ENCODE measurements at regions of chr15 and their contacts with region 1.

Region 1: DNA sequence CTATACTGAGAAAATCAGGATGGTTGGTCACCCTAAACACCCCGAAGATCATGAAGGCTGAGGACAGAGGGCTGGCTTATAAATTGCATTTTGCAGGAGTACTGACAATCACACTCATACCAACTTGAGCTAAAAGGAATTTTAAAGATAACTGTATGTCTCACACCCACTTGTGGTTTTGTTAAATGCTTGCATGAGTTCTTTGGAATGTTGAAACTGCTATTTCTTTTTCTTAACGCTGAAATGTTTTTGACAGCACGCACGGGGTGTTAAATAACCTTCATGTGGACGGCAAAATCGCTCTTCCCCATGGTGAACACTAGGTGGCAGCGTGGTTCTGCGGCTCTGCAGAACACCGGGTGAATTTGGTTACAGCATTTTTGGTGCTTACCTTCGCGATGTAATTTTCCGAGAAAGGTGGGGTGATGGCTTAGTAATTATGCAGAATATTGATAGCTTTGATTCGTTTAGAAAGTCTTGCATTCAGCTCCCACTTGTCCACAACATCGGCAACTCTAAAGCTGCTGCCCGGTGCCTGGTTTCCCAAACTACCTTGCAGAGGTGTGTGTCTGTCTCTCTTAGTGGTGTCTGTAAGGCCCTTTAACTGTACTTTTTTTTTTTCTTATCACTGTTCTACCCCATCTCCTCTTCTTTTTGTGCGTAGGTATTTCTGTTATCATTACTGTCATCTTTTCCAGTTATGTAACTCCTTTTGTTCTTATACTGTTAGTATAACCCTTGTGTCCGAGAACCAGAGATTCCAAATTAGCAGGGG is 51.7 kb downstream of the ARNT2 start:
- DNase-seq: peak; percentile 88
- H3K4me3 ChIP-seq: no peak overlapping the region
- H3K27me3 ChIP-seq: no peaks in the 10 kb centered on the region
- CTCF ChIP-seq: peak; percentile 87

Region 2: DNA sequence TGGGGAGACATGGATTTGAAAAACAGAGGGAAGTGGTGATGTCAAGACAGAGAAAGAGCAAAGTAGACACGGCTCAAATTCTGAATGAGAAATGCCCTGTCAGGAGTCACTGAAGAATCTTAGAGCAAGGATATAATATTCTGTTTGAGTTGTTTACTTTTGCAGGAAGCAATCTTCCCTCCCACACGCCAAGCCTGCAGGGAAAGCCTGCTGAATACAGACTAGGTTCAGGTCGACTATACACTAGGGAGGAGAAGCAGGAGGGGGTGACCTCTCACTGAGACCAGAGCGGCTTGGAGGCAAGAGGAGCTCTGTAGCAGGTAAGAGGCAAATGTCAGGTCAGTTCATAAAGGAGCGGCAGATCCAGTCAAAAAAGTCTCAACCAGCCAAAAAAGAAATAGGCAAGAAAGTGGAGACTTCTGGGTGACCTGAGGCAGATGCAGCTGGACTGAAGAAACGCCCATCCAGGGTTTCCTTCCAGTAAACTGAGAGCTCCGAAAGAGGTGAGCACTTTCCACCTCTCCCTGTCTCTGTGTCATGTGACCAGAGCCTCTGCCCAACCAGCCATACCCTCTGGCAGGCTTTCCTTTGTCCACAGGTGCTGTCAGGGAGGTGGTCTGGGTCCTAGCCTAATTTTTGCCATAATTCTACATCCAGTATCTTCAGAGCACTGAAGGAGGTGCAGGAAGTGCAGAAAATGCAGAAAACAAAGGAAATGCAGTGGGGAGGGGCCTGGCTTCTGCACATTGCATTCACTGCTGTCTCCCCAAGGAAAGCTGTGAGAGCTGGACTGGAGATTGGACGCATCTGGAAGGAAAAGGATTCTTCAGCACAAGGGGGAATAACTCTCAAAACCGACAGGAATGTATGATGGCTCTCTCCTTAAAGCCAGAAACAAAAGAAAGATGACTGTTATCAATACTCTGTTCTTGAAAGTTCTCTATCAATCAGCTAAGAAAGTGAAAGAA is 166.0 kb before region 1 on chr15:
- CTCF ChIA-PET with region 1: no interaction called
- POLR2A ChIA-PET with region 1: no interaction called
- DNase-seq: no peak
- H3K4me3 ChIP-seq: no peak overlapping the region
- H3K27me3 ChIP-seq: peaks cover 3% of the 10 kb centered on the region
- CTCF ChIP-seq: no peak

Region 3: GRCh38 chr15:80474224-80475215 is 18.7 kb after region 1 on chr15:
- CTCF ChIA-PET with region 1: interaction called, 23 read pairs
- POLR2A ChIA-PET with region 1: no interaction called
- DNase-seq: no peak
- H3K4me3 ChIP-seq: no peak overlapping the region
- H3K27me3 ChIP-seq: no peaks in the 10 kb centered on the region
- CTCF ChIP-seq: no peak

Region 4: DNA sequence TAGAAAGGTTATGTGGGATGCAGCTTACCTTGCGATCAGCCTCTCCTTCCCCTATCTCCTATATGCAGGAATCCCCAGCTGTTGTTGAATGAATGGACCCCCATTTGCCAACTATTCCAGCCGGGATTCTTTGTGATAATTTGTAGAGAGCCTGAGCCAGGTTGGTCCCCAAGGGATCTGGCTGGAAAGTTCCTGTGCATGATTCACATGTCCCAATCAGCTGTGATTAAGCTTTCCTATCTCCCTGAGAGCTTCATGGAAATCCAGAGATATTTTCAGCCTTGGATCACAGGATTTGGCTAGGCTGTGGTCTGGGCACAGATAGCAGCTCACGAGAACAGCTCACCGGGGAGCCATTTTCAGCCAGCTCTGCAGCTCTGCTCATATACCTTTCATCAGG is 25.1 kb after region 1 on chr15:
- CTCF ChIA-PET with region 1: interaction called, 23 read pairs
- POLR2A ChIA-PET with region 1: interaction called, 5 read pairs
- DNase-seq: peak; percentile 85
- H3K4me3 ChIP-seq: peak overlapping the region; percentile 10; the same call in 1 of the 2 replicates
- H3K27me3 ChIP-seq: no peaks in the 10 kb centered on the region
- CTCF ChIP-seq: no peak

Region 5: GRCh38 chr15:80489030-80489594 is 33.3 kb after region 1 on chr15:
- CTCF ChIA-PET with region 1: interaction called, 21 read pairs
- POLR2A ChIA-PET with region 1: no interaction called
- DNase-seq: peak; percentile 97
- H3K4me3 ChIP-seq: no peak overlapping the region
- H3K27me3 ChIP-seq: no peaks in the 10 kb centered on the region
- CTCF ChIP-seq: no peak

Region 6: GRCh38 chr15:80526556-80527340 is 70.9 kb after region 1 on chr15:
- CTCF ChIA-PET with region 1: interaction called, 17 read pairs
- POLR2A ChIA-PET with region 1: interaction called, 5 read pairs
- DNase-seq: peak; percentile 81
- H3K4me3 ChIP-seq: no peak overlapping the region
- H3K27me3 ChIP-seq: no peaks in the 10 kb centered on the region
- CTCF ChIP-seq: no peak

Region 7: GRCh38 chr15:80604583-80605575 is 149.0 kb after region 1 on chr15:
- CTCF ChIA-PET with region 1: no interaction called
- POLR2A ChIA-PET with region 1: no interaction called
- DNase-seq: no peak
- H3K4me3 ChIP-seq: no peak overlapping the region
- H3K27me3 ChIP-seq: no peaks in the 10 kb centered on the region
- CTCF ChIP-seq: no peak

Region 8: DNA sequence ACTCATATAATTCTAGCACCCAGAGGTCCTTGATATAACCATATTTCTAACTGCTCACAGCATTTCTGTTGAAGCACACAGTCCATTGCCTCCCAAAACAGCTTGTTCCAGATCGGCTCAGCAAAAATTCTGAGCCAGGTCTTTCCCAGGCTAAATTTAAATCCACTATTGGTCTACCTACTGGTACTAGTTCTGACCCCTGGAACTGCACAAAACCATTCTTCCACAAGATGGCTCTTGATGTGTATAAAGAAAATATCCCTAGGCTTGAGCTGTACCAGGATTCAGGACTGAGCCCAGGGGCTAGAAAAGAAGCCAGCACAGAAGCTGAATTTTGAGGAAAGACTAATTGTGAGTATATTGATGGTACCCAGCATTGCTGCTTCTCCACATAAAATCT is 163.8 kb after region 1 on chr15:
- CTCF ChIA-PET with region 1: interaction called, 12 read pairs
- POLR2A ChIA-PET with region 1: no interaction called
- DNase-seq: no peak
- H3K4me3 ChIP-seq: no peak overlapping the region
- H3K27me3 ChIP-seq: no peaks in the 10 kb centered on the region
- CTCF ChIP-seq: peak; percentile 47

Region 9: DNA sequence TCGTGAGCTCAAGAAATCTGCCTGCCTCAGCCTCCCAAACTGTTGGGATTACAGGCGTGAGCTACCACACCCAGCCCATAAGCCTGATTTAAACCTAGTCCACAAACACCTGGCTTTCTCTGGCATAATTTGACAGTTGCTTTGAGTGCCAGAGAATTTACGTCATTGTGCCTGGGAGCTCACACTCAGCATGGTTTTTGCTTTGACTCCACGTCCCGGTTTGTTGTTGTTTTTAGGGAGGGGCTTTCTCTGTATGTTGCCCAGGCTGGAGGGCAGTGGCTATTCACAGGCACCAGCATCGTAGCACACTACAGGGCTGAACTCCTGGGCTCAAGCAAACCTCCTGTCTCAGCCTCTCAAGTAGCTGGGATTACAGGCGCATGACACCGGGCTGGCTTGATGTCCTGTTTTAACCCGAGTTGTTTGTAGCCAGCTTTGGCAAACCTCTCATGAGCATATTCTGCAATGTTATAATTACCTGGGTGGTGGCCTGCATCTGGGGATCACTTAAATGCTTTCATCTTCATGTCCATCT is 356.0 kb after region 1 on chr15:
- CTCF ChIA-PET with region 1: no interaction called
- POLR2A ChIA-PET with region 1: no interaction called
- DNase-seq: no peak
- H3K4me3 ChIP-seq: no peak overlapping the region
- H3K27me3 ChIP-seq: no peaks in the 10 kb centered on the region
- CTCF ChIP-seq: no peak

Measured in BJ (cell line).